Caco-2 (cell line): ENCODE measurements at regions of chr7 and their contacts with region 1.

Region 1: GRCh38 chr7:70477036-70478010 is 654.6 kb upstream of the GALNT17 start:
- DNase-seq: no peak
- H3K4me3 ChIP-seq: no peak overlapping the region
- H3K4me3 Mint-ChIP-seq: no peak overlapping the region
- H3K27ac Mint-ChIP-seq: no peak overlapping the region
- H3K4me1 ChIP-seq: peaks cover 10% of the 10 kb centered on the region; the same call in 1 of the 2 replicates
- H3K4me1 Mint-ChIP-seq: peaks cover 13% of the 10 kb centered on the region
- H3K27me3 ChIP-seq: no peaks in the 10 kb centered on the region
- H3K27me3 Mint-ChIP-seq: no peaks in the 10 kb centered on the region
- CTCF ChIP-seq: no peak

Region 2: GRCh38 chr7:70463352-70463938 is 13.9 kb before region 1 on chr7:
- CTCF ChIA-PET with region 1: no interaction called
- POLR2A ChIA-PET with region 1: no interaction called
- intact Hi-C with region 1: loop called (anchors 2 kb)
- DNase-seq: peak; percentile 19 to 47
- H3K4me3 ChIP-seq: no peak overlapping the region
- H3K4me3 Mint-ChIP-seq: no peak overlapping the region
- H3K27ac Mint-ChIP-seq: no peak overlapping the region
- H3K4me1 ChIP-seq: peaks cover 26% of the 10 kb centered on the region
- H3K4me1 Mint-ChIP-seq: peaks cover 17% of the 10 kb centered on the region
- H3K27me3 ChIP-seq: no peaks in the 10 kb centered on the region
- H3K27me3 Mint-ChIP-seq: no peaks in the 10 kb centered on the region
- CTCF ChIP-seq: no peak